ENCODE measurements at regions of chr2 and their contacts with region 1.

Region 1: DNA sequence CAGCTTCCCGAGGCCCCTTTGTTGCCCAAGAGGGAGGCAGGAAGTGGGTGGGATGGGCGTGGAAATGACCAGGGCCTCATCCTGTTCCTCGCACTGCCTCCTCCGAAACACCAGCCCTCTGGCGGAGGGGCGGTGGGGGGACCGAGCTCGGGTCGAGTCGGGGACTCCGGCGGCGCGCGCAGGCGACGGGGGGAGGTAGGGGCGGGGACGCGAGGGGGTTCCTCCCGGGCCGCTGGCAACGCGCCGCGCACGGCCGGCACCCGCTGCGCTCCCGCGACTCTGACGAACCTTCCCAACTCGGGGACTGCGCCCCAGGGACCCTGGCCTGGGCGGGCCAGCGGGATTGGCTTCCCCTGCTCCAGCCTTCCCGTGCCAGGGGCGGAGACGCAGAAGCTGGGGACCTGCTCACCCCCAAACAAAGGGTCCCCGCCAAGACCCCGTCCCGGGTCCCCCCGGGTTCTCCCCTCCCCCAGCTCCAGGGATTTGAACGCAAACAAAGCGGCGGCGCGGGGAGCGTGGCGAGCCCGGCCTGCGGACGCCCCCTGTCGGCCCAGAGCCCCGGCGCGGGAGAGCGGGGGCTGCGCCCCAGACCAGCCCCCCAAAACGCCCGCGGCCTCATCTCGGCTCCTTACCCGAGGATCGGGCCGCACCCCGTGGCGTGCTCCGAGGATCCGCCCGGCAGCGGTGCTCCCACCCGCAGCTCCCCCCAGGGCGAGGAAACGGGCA is 1.2 kb downstream of the SEMA4C start:
- DNase-seq: peak; percentile 88 to 92 (median 90)
- H3K4me3 ChIP-seq: peak overlapping the region; percentile 91
- H3K27ac ChIP-seq: peak overlapping the region; percentile 96 to 98
- H3K4me1 ChIP-seq: peaks cover 10% of the 10 kb centered on the region
- H3K27me3 ChIP-seq: no peaks in the 10 kb centered on the region
- CTCF ChIP-seq: peak; percentile 38 to 76 (median 66)
- EP300 ChIP-seq: no peak
- POLR2A ChIP-seq: peak; percentile 17

Region 2: DNA sequence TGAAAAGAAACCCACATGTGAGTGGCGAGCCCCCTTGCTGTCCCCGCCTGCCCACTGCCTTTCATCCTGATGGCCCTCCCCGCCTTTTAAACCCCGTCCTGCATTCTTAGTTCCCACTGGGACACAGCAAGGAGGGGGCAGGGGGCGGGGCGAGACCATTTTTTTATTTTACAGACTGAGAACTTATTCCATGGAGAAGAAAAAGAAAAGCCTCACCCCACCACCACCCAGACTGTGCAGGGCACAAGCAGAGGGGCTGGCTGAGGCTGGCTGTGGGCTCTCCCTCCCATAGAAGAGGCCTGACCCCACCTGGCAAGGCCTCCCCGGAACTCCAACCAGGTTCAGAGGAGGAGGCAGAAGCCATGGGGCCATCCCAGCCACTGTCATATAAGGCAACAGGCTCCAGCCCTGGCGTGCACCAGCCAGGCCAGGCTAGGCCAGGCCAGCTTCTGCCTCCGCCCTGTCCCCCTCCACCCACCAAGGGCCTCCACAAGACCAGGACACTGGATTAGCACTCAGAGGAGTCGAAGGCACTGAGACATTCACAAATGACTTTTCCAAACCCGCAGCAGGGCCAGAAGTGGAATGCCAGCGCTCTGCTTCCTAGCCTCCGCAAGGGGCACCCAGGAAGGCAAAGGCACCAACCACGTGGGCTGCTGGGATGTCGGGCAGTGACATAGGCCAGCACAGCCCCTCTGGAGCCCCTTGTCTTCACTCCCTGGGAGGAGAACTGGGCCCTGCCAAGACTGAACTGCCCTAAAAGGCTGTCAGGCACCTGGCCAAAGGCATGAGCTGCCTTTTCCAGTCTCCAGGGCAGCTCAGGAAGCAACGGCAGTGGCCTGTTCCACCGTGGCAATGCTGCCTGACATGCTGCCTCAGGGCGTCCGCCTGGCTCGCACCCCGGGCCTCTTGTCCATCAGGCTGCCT is 38.7 kb after region 1 on chr2:
- intact Hi-C with region 1: loop called in 2 of 4 experiments (anchors 2 kb)
- DNase-seq: peak; percentile 64 to 76 (median 70)
- H3K4me3 ChIP-seq: peak overlapping the region; percentile 11
- H3K27ac ChIP-seq: peak overlapping the region; percentile 40 to 78
- H3K4me1 ChIP-seq: peaks cover 18% of the 10 kb centered on the region
- H3K27me3 ChIP-seq: no peaks in the 10 kb centered on the region
- CTCF ChIP-seq: no peak
- EP300 ChIP-seq: no peak
- POLR2A ChIP-seq: peak; percentile 41

Region 3: GRCh38 chr2:96918754-96919550 is 50.2 kb after region 1 on chr2:
- intact Hi-C with region 1: no loop called
- DNase-seq: no peak
- H3K4me3 ChIP-seq: no peak overlapping the region
- H3K27ac ChIP-seq: no peak overlapping the region
- H3K4me1 ChIP-seq: no peaks in the 10 kb centered on the region
- H3K27me3 ChIP-seq: no peaks in the 10 kb centered on the region
- CTCF ChIP-seq: no peak
- EP300 ChIP-seq: no peak
- POLR2A ChIP-seq: no peak

Measured in ovary (tissue), 10 donors.